ENCODE measurements at regions of chr2 and their contacts with region 1.

Region 1: DNA sequence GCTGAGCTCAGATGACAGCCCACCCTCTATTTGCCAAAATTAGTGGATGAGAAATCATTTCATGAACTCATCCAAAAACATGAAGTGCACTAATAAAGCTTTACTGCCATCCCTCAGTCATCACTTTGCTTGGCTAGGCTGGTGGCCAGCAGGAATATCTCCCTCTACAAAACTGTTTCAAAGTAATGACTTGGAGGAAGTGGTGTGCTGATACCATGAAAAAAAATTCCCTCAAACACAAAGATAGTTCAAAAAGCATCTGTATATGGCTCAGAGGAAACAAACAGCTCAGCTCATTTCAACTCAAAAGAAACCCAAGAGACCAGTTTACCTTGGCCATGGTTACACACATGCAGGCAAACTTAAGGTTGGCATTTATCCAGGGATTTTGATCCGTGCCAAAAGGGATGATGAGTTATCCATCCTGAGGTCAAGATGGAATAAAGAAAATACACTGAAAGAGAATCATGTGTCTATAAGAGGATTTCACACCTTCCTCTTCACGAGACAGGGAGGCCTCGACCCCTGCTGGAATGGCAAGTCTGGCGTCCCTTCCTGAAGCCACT is 18.4 kb upstream of the WIPF1 start:
- DNase-seq: no peak
- H3K4me3 Mint-ChIP-seq: peak overlapping the region; percentile 32
- H3K27ac Mint-ChIP-seq: peak overlapping the region; percentile 85
- H3K4me1 Mint-ChIP-seq: peaks cover 87% of the 10 kb centered on the region
- H3K27me3 Mint-ChIP-seq: no peaks in the 10 kb centered on the region

Region 2: DNA sequence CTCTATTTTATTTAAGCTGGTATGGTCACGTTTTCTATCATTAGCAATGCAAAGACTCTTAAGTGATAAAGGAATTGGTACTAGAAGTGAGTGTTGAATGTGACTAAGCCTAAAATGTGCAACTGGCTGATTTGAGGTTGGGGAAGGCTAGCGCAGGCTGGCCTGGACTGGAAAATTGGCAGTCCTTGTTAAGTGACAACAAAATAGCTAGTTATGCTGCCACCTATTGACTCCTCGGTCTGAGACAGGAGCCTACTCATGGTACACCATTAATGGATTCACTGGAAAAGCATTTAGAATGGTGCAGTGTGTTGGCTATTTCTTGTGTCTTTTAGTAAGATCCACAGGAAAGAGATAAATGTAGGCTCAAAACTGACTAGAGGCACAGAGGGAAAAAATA is 12.7 kb before region 1 on chr2:
- CTCF ChIA-PET with region 1: interaction called, 91 read pairs
- POLR2A ChIA-PET with region 1: interaction called, 3 read pairs
- DNase-seq: peak; percentile 68
- H3K4me3 Mint-ChIP-seq: no peak overlapping the region
- H3K27ac Mint-ChIP-seq: peak overlapping the region; percentile 31
- H3K4me1 Mint-ChIP-seq: peaks cover 87% of the 10 kb centered on the region
- H3K27me3 Mint-ChIP-seq: no peaks in the 10 kb centered on the region